Natural killer cell (primary cell): ENCODE measurements at regions of chr19 and their contacts with region 1.

Region 1: DNA sequence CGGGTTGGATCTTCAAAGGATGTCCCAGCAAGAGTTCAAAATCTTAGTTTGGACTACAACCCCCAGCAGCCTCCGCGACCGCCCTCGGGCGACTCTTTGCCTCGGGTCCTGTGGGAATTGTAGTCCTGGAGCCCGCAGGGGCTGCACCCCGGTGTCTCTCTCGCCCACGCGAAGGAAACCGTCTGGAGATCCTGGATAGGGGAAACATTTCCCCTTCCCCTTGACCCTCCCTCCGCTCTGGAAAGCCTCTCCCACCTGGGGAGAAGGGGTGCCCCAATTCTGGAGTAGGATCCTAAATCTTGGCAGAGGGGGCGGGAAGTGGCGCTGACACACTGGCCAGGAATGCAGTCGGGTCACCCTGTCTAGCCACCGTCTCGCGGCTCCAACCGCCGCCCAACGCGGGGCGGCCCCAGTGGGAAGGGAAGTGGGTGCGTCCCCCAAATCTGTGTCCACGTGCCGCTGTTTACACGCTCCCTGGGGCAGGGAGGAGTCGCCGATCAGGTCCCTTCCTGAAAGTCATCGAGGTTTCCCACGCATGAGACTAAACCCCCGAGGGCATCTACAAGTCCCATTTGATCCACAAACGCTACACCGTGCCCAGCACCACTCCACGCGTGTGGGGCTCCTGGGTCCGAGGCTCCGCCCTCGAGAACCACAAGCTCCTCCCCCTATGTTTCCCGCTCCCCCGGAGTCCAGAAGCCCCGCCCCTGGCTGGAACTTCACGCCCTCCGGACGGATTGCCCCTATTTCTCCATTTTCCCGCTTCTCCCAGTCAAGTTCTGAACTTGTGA is 761 bp upstream of the PPP1R13L start:
- DNase-seq: peak; percentile 71 to 88
- ATAC-seq: peak; percentile 64 to 79 (median 70)
- H3K4me3 ChIP-seq: peak overlapping the region; percentile 67
- H3K4me3 Mint-ChIP-seq: peak overlapping the region; percentile 97
- H3K27ac ChIP-seq: peak overlapping the region; percentile 84
- H3K27ac Mint-ChIP-seq: peak overlapping the region; percentile 86 to 92
- H3K4me1 ChIP-seq: peaks cover 35% of the 10 kb centered on the region
- H3K4me1 Mint-ChIP-seq: peaks cover 33 to 37% of the 10 kb centered on the region in 2 donors
- H3K27me3 ChIP-seq: peaks cover 25% of the 10 kb centered on the region
- H3K27me3 Mint-ChIP-seq: peaks cover 10 to 14% of the 10 kb centered on the region in 2 donors
- CTCF ChIP-seq: no peak

Region 2: GRCh38 chr19:45370410-45371204 is 35.0 kb before region 1 on chr19 and contains the start of gene ERCC2:
- intact Hi-C with region 1: loop called (anchors 2 kb)
- DNase-seq: peak; percentile 100
- ATAC-seq: peak; percentile 98 to 99 (median 98)
- H3K4me3 ChIP-seq: peak within 1 kb of the TSS; percentile 75
- H3K4me3 Mint-ChIP-seq: peak within 1 kb of the TSS; percentile 91
- H3K27ac ChIP-seq: peak within 1 kb of the TSS; percentile 77
- H3K27ac Mint-ChIP-seq: peak within 1 kb of the TSS; percentile 88 to 89
- H3K4me1 ChIP-seq: peaks cover 15% of the 10 kb centered on the region
- H3K4me1 Mint-ChIP-seq: peaks cover 6 to 10% of the 10 kb centered on the region in 2 donors
- H3K27me3 ChIP-seq: no peaks in the 10 kb centered on the region
- H3K27me3 Mint-ChIP-seq: peaks cover 0 to 4% of the 10 kb centered on the region in 2 donors
- CTCF ChIP-seq: no peak
- total RNA-seq, gene ERCC2: 13.4 to 22.3 (median 14.9) TPM

Region 3: GRCh38 chr19:45391340-45391739 is 14.3 kb before region 1 on chr19:
- intact Hi-C with region 1: no loop called
- DNase-seq: no peak
- ATAC-seq: no peak
- H3K4me3 ChIP-seq: no peak overlapping the region
- H3K4me3 Mint-ChIP-seq: no peak overlapping the region
- H3K27ac ChIP-seq: no peak overlapping the region
- H3K27ac Mint-ChIP-seq: no peak overlapping the region
- H3K4me1 ChIP-seq: no peaks in the 10 kb centered on the region
- H3K4me1 Mint-ChIP-seq: peaks cover 0 to 5% of the 10 kb centered on the region in 2 donors
- H3K27me3 ChIP-seq: peaks cover 3% of the 10 kb centered on the region
- H3K27me3 Mint-ChIP-seq: peaks cover 4 to 19% of the 10 kb centered on the region in 2 donors
- CTCF ChIP-seq: no peak

Region 4: GRCh38 chr19:45478454-45479238 is 73.0 kb after region 1 on chr19:
- intact Hi-C with region 1: loop called (anchors 2 kb)
- DNase-seq: peak; percentile 88 to 96
- ATAC-seq: peak; percentile 58 to 84 (median 67)
- H3K4me3 ChIP-seq: peak overlapping the region; percentile 60
- H3K4me3 Mint-ChIP-seq: peak overlapping the region; percentile 74
- H3K27ac ChIP-seq: peak overlapping the region; percentile 89
- H3K27ac Mint-ChIP-seq: peak overlapping the region; percentile 87 to 90
- H3K4me1 ChIP-seq: peaks cover 30% of the 10 kb centered on the region
- H3K4me1 Mint-ChIP-seq: peaks cover 42 to 55% of the 10 kb centered on the region in 2 donors
- H3K27me3 ChIP-seq: no peaks in the 10 kb centered on the region
- H3K27me3 Mint-ChIP-seq: peaks cover 0 to 10% of the 10 kb centered on the region in 2 donors
- CTCF ChIP-seq: peak; percentile 76